ENCODE measurements at regions of chr6 and their contacts with region 1.

Region 1: DNA sequence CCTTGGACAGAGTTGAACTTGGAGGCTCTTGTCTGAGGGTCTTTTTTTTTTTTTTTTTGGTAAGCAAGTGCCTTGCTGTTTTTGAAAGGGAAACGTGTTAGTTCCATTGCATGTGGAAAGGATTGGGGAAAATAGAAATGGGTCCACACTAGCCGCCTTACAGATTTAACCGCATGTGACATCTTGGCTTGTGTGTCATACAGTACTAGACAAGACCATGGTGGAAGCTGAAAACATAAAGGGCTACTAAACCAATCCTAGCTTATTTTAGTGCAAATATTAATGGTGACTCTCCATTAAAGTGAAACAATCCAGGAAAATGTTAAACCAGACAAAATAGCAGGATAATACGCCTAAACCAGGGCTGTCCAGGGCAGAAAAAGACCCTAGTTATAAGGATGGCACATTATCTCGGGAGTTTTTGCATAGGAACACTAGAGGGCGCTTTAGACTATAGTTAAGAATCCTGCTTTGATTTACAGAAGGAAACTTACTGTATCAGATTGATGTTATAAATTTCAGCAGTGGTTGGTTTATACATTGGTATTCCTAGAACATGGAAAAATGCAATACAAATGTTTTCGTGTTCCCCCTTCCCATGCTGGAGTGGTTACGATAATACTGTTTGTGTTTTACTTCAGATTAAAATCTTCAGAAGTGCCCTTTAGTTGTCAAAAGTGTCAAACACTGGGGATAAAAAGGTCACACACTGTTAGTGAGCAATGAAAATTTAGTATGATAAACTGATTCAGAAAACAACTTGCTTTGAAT is 59.8 kb upstream of the DEK start:
- DNase-seq: peak in 4 of 5 donors; percentile 33 to 47 (median 44)
- H3K4me3 ChIP-seq: no peak overlapping the region
- H3K4me3 Mint-ChIP-seq: no peak overlapping the region
- H3K27ac ChIP-seq: no peak overlapping the region
- H3K27ac Mint-ChIP-seq: no peak overlapping the region
- H3K4me1 ChIP-seq: no peaks in the 10 kb centered on the region
- H3K4me1 Mint-ChIP-seq: no peaks in the 10 kb centered on the region
- H3K27me3 ChIP-seq: no peaks in the 10 kb centered on the region
- H3K27me3 Mint-ChIP-seq: peaks cover 2 to 4% of the 10 kb centered on the region in 2 donors

Region 2: DNA sequence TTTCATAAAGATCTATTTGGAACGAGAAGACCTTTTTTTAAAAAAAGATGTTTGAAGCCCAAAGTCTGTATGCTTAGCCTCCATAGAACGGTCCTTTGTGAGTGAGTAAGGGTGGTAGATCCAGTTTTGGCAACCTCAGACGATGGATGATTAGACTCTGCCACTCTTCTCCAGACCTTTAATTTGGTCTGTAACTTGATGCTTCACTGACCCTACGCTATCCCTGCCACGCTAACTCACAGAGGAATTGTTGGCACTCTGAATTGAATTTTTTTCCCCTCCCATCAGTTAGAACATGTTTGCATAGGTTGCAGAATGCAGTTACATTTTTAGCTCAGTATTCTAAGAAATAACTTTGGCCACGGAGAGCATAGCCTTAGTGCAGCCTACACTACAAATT is 44.0 kb before region 1 on chr6:
- CTCF ChIA-PET with region 1: no interaction called
- POLR2A ChIA-PET with region 1: no interaction called
- intact Hi-C with region 1: no loop called
- DNase-seq: no peak
- H3K4me3 ChIP-seq: no peak overlapping the region
- H3K4me3 Mint-ChIP-seq: no peak overlapping the region
- H3K27ac ChIP-seq: no peak overlapping the region
- H3K27ac Mint-ChIP-seq: no peak overlapping the region
- H3K4me1 ChIP-seq: no peaks in the 10 kb centered on the region
- H3K4me1 Mint-ChIP-seq: peaks cover 0 to 10% (median 4%) of the 10 kb centered on the region in 4 donors
- H3K27me3 ChIP-seq: peaks cover 21% of the 10 kb centered on the region
- H3K27me3 Mint-ChIP-seq: peaks cover 38 to 44% of the 10 kb centered on the region in 2 donors

Region 3: DNA sequence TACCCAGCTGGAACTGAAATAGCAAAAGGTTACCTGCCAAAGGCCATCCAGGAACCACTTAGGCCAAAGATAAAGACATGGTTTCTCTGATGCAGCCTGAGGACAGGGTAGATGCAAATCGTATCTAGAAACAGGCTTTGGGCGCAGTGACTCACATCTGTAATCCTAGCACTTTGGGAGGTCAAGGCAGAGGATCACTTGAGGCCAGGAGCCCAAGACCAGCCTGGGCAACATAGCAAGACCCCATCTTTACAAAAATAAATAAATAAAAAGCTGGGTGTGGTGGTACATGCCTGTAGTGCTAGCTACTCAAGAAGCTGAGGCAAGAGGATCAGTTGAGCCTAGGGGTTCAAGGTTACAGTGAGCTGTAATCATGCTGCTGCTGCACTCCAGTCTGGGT is 10.1 kb after region 1 on chr6:
- CTCF ChIA-PET with region 1: interaction called, 12 read pairs
- POLR2A ChIA-PET with region 1: no interaction called
- intact Hi-C with region 1: no loop called
- DNase-seq: no peak
- H3K4me3 ChIP-seq: no peak overlapping the region
- H3K4me3 Mint-ChIP-seq: no peak overlapping the region
- H3K27ac ChIP-seq: no peak overlapping the region
- H3K27ac Mint-ChIP-seq: no peak overlapping the region
- H3K4me1 ChIP-seq: no peaks in the 10 kb centered on the region
- H3K4me1 Mint-ChIP-seq: no peaks in the 10 kb centered on the region
- H3K27me3 ChIP-seq: no peaks in the 10 kb centered on the region
- H3K27me3 Mint-ChIP-seq: peaks cover 7 to 8% of the 10 kb centered on the region in 2 donors

Region 4: DNA sequence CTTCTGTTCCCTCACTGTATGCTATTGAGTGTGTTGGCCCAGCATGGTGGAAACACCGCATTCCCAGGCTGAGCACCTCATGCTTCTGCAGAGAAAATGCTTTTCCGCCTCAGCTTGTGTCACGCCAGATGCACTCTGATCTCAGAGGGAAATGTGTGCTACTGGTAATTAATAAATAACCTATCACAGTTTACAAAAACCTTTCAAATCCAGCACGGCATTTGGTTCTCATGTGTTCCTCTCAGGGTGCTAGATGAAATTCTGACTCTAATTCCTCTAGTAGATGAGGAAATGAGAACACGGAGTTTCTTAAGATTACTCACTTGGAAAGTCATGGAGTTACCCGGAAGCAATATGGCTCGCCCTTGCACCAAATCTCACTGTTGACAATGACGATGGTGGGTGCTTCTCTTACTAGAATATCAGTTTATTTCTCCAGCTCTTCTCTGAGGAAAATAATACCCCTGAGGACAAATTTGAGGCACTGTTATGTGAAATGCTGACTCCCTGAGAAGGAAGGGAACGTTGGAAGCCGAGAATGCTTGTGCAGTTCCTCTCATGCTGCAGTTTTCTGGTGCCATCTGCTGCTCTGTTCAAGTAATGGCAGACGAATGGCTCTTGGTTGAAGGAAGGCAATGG is 179.6 kb after region 1 on chr6:
- CTCF ChIA-PET with region 1: interaction called, 254 read pairs
- POLR2A ChIA-PET with region 1: no interaction called
- intact Hi-C with region 1: loop called (anchors 1 kb)
- DNase-seq: peak in 4 of 5 donors; percentile 37 to 39 (median 38)
- H3K4me3 ChIP-seq: no peak overlapping the region
- H3K4me3 Mint-ChIP-seq: peak overlapping the region in 3 of 8 donors; percentile 6 to 52 (median 32)
- H3K27ac ChIP-seq: no peak overlapping the region
- H3K27ac Mint-ChIP-seq: no peak overlapping the region
- H3K4me1 ChIP-seq: no peaks in the 10 kb centered on the region
- H3K4me1 Mint-ChIP-seq: peaks cover 0 to 3% (median 0%) of the 10 kb centered on the region in 4 donors
- H3K27me3 ChIP-seq: no peaks in the 10 kb centered on the region
- H3K27me3 Mint-ChIP-seq: peaks cover 0 to 2% of the 10 kb centered on the region in 2 donors

Measured in CD4-positive, alpha-beta memory T cell (primary cell).